ENCODE measurements at regions of chr12 and their contacts with region 1.

Region 1: GRCh38 chr12:54993161-54993835 is 8.7 kb upstream of the TESPA1 start:
- DNase-seq: peak; percentile 65 to 66
- H3K4me3 ChIP-seq: no peak overlapping the region
- H3K4me1 ChIP-seq: peaks cover 2% of the 10 kb centered on the region; the same call in 1 of the 2 replicates
- H3K27me3 ChIP-seq: no peaks in the 10 kb centered on the region

Region 2: GRCh38 chr12:55068416-55069010 is 75.2 kb after region 1 on chr12:
- in situ Hi-C with region 1: loop called (anchors 5 kb)
- DNase-seq: peak; percentile 54 to 68
- H3K4me3 ChIP-seq: no peak overlapping the region
- H3K4me1 ChIP-seq: no peaks in the 10 kb centered on the region
- H3K27me3 ChIP-seq: no peaks in the 10 kb centered on the region; the same call in 1 of the 2 replicates

Region 3: GRCh38 chr12:55142669-55143565 is 149.6 kb after region 1 on chr12:
- in situ Hi-C with region 1: loop called (anchors 10 kb)
- DNase-seq: peak; percentile 51 to 71
- H3K4me3 ChIP-seq: no peak overlapping the region
- H3K4me1 ChIP-seq: no peaks in the 10 kb centered on the region
- H3K27me3 ChIP-seq: no peaks in the 10 kb centered on the region

Region 4: DNA sequence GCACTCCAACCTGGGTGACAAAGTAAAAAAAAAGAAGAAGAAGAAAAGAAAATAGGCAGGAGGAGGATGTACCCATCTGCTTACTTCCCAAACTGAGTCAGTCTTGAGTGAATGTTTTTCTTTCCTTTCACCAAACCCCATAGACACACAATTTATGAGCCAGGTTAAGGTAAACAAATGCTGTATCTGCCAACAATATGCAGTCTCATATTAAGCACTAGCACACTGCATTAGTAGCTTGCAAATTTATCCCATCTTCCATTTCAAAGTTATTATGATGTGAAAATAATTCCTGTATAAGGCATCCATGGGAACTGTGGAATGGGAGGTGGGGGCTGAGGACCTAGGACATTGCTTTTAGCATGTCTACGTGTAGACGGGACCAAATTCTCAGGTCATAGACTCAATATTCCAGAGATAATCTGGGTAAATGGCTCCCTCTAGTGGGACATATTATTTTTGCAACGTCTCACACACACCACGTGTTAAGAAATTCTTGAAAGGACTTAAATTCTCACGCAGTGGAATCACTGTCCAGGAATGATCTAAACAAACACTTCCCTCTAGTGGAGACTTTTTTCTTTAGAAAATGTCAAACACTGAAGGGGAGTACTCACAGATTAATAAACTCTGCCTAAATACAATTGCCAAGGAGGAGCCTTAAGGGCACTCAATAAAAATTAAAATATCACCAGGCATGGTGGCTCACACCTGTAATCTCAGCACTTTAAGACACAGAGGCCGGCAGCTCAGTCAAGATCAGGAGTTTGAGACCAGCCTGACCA is 626.2 kb after region 1 on chr12:
- in situ Hi-C with region 1: loop called (anchors 25 kb)
- DNase-seq: peak; percentile 77 to 92
- H3K4me3 ChIP-seq: no peak overlapping the region
- H3K4me1 ChIP-seq: no peaks in the 10 kb centered on the region
- H3K27me3 ChIP-seq: 0 out of 2 replicates have a peak, but pooled peaks cover 3% of the 10 kb centered on the region

Region 5: DNA sequence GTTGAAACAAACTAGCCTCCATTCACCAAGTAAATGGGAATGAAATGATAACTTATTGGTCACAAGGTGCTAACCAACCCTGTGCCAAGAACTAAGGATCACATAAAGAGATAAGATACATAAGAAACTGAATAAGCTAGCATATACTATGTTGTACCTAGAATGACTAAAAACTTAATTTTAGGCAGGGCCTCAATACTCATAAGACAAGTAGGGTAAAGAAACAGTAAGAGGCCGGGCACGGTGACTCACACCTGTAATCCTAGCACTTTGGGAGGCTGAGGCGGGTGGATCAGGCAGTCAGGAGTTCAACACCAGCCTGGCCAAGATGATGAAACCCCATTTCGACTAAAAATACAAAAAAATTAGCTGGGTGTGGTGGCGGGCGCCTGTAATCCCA is 767.4 kb after region 1 on chr12:
- in situ Hi-C with region 1: no loop called
- DNase-seq: no peak
- H3K4me3 ChIP-seq: no peak overlapping the region
- H3K4me1 ChIP-seq: no peaks in the 10 kb centered on the region
- H3K27me3 ChIP-seq: no peaks in the 10 kb centered on the region